Sciatic nerve (tissue), 2 donors: ENCODE measurements at regions of chr7 and their contacts with region 1.

Region 1: DNA sequence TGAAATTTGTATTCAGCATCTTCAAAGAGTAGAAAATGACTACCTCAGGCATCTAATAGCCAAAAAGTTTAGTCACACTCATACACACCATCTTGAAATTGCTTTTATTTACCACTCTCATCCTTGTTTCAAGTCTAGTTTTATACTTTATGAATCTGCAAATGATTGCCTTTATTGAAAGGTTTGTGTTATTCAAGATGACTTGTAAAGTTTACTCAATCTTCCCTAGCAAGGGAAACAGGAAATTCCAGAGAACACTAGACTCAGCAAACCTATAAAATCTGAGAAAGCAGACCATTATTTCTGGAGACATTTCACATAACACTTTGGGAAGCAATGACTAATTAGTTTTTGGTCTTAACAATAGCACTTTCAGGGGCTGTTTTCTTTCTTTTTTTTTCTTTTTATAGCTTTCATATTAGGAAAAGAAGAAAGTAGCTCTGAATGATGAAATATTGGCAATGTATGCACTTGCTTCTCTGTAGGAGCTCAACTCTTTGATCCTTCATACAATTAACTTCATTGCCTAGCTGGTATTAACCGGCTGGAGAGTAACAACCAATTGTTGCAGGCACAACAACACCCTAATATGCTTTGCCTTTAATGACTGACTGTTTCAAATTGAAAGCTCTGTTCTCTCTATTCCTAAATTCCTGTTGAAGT is 68.9 kb upstream of the HDAC9 start:
- DNase-seq: no peak
- ATAC-seq: no peak

Region 2: DNA sequence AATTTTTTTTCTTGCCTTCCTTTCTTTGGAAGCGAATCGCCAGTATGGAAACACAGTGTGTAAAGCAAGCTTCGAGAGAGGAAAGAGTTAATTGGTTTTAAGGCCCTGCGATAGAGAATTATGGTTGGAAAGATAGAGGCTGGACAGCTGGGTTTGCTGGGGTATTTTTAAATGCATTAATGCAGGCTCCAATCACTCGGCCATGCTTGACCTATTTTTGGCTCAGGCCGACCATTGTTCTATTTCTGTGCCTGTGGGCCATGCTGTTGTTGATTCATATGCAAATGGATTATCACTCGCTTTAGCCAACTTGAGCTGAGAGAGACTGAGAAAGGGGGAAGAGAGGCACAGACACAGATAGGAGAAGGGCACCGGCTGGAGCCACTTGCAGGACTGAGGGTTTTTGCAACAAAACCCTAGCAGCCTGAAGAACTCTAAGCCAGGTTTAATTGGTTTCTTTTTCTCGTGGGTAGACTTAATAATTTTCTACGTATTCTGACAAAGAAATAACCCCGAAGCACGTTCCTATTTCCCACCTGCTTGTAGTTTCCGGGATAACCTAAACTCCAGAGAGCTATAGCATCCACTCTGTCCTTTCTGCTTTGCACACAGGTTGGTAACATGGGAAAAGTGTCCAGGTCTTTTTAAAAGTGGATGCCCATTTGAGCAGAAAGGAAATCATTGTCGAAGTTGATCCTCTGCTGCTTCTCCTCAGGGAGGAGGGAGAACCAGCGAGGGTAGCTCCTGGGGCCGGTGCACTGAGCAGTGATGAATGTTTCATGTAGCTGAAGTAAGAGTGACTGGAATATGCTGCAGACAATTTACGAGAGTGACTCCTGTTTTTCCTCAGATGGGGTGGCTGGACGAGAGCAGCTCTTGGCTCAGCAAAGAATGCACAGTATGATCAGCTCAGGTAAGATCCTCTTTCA is 69.0 kb after region 1 on chr7 and contains the start of gene HDAC9:
- intact Hi-C with region 1: no loop called
- DNase-seq: no peak
- ATAC-seq: peak; percentile 75
- total RNA-seq, gene HDAC9: 27.6 TPM

Region 3: DNA sequence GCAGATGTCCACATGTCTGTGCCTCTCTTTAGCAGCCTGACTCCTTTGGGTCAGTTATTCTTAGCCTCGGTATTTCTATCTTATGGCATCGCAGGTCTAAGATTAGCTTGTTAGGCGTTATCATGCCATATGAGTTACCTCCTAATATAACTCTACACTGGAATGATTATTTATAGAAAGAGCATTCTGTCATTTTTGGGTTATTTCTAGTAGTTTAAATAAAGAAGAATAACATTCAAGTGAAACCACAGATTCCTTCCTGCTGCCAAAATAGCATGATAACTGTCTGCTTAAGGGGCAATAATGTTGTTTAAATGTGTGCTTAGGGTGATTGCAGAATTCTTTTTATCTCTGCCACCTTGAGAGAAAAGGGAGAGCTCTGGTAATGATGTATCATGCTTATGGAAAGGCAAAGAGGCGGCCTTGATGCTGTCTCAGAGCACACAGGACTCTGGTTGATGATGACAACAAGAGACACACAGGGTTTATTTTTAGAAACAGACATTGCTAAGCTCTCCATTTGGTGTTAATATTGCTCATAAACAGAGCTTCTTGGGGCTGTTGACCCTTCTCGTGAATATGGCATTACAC is 79.3 kb after region 1 on chr7:
- intact Hi-C with region 1: no loop called
- DNase-seq: no peak
- ATAC-seq: no peak

Region 4: DNA sequence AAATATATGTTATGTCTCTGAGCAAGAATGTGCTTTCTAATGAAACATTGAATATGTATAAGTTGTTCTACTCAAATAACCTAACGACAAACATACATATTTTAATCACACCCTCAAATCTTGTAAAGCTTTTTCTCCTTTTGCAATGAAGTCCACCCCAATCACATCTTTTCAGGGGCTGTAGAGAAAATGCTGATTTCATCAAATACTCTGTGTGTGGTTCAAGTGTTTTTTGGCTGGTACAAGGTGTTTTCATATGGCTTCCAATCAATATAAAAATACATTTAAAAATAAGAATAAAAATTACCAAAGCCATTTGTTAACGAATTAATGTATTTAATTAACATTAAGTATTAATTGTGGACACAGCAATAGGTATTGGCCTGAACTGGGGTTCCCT is 1403.9 kb after region 1 on chr7:
- intact Hi-C with region 1: no loop called
- DNase-seq: no peak
- ATAC-seq: no peak

Region 5: GRCh38 chr7:20393021-20393610 is 1966.4 kb after region 1 on chr7:
- intact Hi-C with region 1: loop called (anchors 5 kb)
- DNase-seq: no peak
- ATAC-seq: no peak